ENCODE measurements at regions of chr2 and their contacts with region 1.

Region 1: GRCh38 chr2:95115418-95115817 is 6.2 kb downstream of the MRPS5 start:
- DNase-seq: peak; percentile 64
- ATAC-seq: peak; percentile 87
- H3K4me3 ChIP-seq: no peak overlapping the region
- H3K4me3 Mint-ChIP-seq: no peak overlapping the region
- H3K27ac ChIP-seq: no peak overlapping the region
- H3K27ac Mint-ChIP-seq: no peak overlapping the region
- H3K4me1 ChIP-seq: peaks cover 9 to 13% of the 10 kb centered on the region in 2 donors
- H3K4me1 Mint-ChIP-seq: peaks cover 33% of the 10 kb centered on the region
- H3K27me3 ChIP-seq: no peaks in the 10 kb centered on the region
- H3K27me3 Mint-ChIP-seq: no peaks in the 10 kb centered on the region
- CTCF ChIP-seq: peak; percentile 77

Region 2: GRCh38 chr2:95022309-95023221 is 92.9 kb before region 1 on chr2:
- CTCF ChIA-PET with region 1: interaction called, 7 read pairs
- POLR2A ChIA-PET with region 1: no interaction called
- intact Hi-C with region 1: loop called (anchors 2 kb)
- DNase-seq: peak; percentile 48
- ATAC-seq: peak; percentile 45
- H3K4me3 ChIP-seq: no peak overlapping the region
- H3K4me3 Mint-ChIP-seq: no peak overlapping the region
- H3K27ac ChIP-seq: no peak overlapping the region
- H3K27ac Mint-ChIP-seq: no peak overlapping the region
- H3K4me1 ChIP-seq: peaks cover 9 to 15% of the 10 kb centered on the region in 2 donors
- H3K4me1 Mint-ChIP-seq: peaks cover 5% of the 10 kb centered on the region
- H3K27me3 ChIP-seq: peaks cover 0 to 45% (median 17%) of the 10 kb centered on the region in 4 experiments
- H3K27me3 Mint-ChIP-seq: peaks cover 50% of the 10 kb centered on the region
- CTCF ChIP-seq: peak; percentile 53

Region 3: GRCh38 chr2:95076784-95077529 is 38.5 kb before region 1 on chr2:
- CTCF ChIA-PET with region 1: interaction called, 12 read pairs
- POLR2A ChIA-PET with region 1: no interaction called
- intact Hi-C with region 1: loop called (anchors 1 kb)
- DNase-seq: peak; percentile 73
- ATAC-seq: peak; percentile 90
- H3K4me3 ChIP-seq: peak overlapping the region in 4 of 5 experiments; percentile 7 to 41 (median 20)
- H3K4me3 Mint-ChIP-seq: peak overlapping the region; percentile 64
- H3K27ac ChIP-seq: no peak overlapping the region
- H3K27ac Mint-ChIP-seq: no peak overlapping the region
- H3K4me1 ChIP-seq: peaks cover 9 to 11% of the 10 kb centered on the region in 2 donors
- H3K4me1 Mint-ChIP-seq: peaks cover 10% of the 10 kb centered on the region
- H3K27me3 ChIP-seq: peaks cover 0 to 26% (median 8%) of the 10 kb centered on the region in 4 experiments
- H3K27me3 Mint-ChIP-seq: peaks cover 17% of the 10 kb centered on the region
- CTCF ChIP-seq: peak; percentile 82

Region 4: DNA sequence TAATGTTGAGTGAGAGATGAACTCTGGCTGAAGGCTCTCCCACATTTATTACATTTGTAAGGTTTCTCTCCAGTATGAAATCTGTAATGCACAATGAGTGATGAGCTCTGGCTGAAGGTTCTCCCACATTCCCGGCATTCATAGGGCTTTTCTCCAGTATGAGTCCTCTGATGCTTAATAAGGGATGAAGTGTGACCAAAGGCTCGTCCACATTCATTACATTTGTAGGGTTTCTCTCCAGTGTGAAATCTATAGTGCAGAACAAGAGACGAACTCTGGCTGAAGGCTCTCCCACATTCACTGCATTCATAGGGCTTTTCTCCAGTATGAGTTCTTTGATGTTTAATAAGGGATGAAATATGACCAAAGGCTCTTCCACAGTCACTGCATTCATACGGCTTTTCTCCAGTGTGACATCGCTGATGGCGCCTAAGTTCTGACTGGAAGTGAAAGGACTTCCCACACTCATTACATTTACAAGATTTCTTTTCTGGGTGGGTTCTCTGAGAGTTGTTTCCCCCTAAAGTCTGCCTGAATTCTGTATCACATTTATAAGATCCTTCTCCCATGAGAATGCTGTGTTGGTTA is 34.1 kb after region 1 on chr2:
- CTCF ChIA-PET with region 1: no interaction called
- POLR2A ChIA-PET with region 1: interaction called, 10 read pairs
- intact Hi-C with region 1: no loop called
- DNase-seq: no peak
- ATAC-seq: no peak
- H3K4me3 ChIP-seq: no peak overlapping the region
- H3K4me3 Mint-ChIP-seq: no peak overlapping the region
- H3K27ac ChIP-seq: no peak overlapping the region
- H3K27ac Mint-ChIP-seq: no peak overlapping the region
- H3K4me1 ChIP-seq: no peaks in the 10 kb centered on the region
- H3K4me1 Mint-ChIP-seq: no peaks in the 10 kb centered on the region
- H3K27me3 ChIP-seq: no peaks in the 10 kb centered on the region
- H3K27me3 Mint-ChIP-seq: no peaks in the 10 kb centered on the region
- CTCF ChIP-seq: no peak